Activated naive CD4-positive, alpha-beta T cell treated with anti-CD3 and anti-CD28 coated beads for 36 hours (primary cell): ENCODE measurements at regions of chr3 and their contacts with region 1.

Region 1: GRCh38 chr3:125141596-125142419 is 70.7 kb downstream of the SLC12A8 start:
- DNase-seq: peak; percentile 84
- H3K4me3 Mint-ChIP-seq: peak overlapping the region; percentile 67
- H3K27ac Mint-ChIP-seq: peak overlapping the region; percentile 50
- H3K4me1 Mint-ChIP-seq: peaks cover 34% of the 10 kb centered on the region
- H3K27me3 Mint-ChIP-seq: peaks cover 22% of the 10 kb centered on the region

Region 2: GRCh38 chr3:124928333-124929202 is 213.2 kb before region 1 on chr3:
- CTCF ChIA-PET with region 1: no interaction called
- intact Hi-C with region 1: loop called (anchors 1 kb)
- DNase-seq: peak; percentile 82
- H3K4me3 Mint-ChIP-seq: no peak overlapping the region
- H3K27ac Mint-ChIP-seq: no peak overlapping the region
- H3K4me1 Mint-ChIP-seq: no peaks in the 10 kb centered on the region
- H3K27me3 Mint-ChIP-seq: peaks cover 3% of the 10 kb centered on the region

Region 3: DNA sequence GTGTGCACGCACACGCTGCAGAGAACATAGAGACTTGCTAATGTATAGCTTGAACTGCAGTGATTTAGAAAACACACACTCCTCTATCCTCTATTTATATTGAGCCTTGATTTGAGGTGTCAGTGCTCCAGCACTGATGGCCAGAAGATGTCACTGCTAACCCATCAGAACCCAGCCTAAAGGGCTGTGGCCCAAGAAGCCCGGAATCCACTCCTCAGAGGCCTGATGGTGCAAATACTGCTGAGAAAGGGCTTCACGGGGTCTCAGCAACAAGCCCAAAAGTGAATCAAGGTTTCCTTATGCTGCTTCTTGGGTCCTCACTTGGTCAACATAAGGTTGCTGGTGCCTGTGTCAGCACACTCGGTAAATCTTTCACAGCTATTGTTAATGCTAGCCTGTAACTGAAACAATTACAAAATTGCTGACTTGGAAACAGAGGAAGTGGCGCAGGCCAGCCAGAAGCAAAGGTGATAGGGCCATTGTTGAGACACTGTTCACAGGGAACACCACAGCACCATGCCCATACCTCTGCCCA is 146.3 kb before region 1 on chr3:
- CTCF ChIA-PET with region 1: no interaction called
- intact Hi-C with region 1: loop called (anchors 2 kb)
- DNase-seq: peak; percentile 72
- H3K4me3 Mint-ChIP-seq: no peak overlapping the region
- H3K27ac Mint-ChIP-seq: peak overlapping the region; percentile 24
- H3K4me1 Mint-ChIP-seq: peaks cover 3% of the 10 kb centered on the region
- H3K27me3 Mint-ChIP-seq: no peaks in the 10 kb centered on the region

Region 4: GRCh38 chr3:125003369-125003853 is 138.4 kb before region 1 on chr3:
- CTCF ChIA-PET with region 1: no interaction called
- intact Hi-C with region 1: loop called (anchors 2 kb)
- DNase-seq: no peak
- H3K4me3 Mint-ChIP-seq: no peak overlapping the region
- H3K27ac Mint-ChIP-seq: no peak overlapping the region
- H3K4me1 Mint-ChIP-seq: peaks cover 35% of the 10 kb centered on the region
- H3K27me3 Mint-ChIP-seq: no peaks in the 10 kb centered on the region

Region 5: DNA sequence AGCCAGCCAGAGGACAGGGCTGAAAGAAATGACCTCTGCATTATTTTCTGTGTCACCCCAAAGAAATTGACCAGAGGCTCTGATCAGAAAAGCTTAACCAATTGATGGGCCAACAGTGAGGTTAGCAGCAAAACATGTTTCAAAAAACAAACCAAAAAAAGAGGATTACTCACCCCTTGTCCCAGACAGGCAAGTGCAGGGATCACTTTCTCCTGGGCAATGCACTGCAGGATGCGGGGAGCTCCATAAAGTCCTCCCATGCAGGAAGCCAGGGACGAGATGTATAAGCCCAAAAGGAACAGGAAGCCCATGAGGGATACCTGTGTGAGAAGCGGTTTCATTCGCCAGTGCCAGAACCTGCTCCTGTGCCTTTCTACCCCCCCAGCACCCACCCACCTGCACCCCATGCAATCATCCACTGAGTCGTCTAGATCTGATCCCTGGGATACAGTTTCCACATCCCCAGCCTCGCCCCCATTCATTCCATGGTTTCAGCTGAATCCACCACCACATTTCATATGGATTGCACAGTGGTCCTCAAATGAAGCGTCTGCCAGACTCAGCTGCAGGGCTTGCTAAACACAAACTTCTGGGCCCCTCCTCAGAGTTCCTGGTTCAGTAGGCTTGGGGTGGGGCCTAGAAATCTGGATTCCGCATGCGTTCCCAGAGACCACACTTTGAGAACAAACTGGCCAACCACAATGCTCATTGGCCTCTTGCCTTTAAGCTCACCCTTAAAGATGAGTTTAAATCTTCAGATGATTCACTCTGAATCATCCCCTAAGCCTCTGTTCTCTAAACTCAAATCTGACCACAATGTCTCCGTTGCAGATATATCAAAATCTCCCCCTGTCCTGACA is 31.6 kb before region 1 on chr3:
- CTCF ChIA-PET with region 1: no interaction called
- intact Hi-C with region 1: loop called (anchors 1 kb)
- DNase-seq: no peak
- H3K4me3 Mint-ChIP-seq: no peak overlapping the region
- H3K27ac Mint-ChIP-seq: no peak overlapping the region
- H3K4me1 Mint-ChIP-seq: peaks cover 32% of the 10 kb centered on the region
- H3K27me3 Mint-ChIP-seq: peaks cover 8% of the 10 kb centered on the region